GM10248 (cell line): ENCODE measurements at regions of chr11 and their contacts with region 1.

Region 1: DNA sequence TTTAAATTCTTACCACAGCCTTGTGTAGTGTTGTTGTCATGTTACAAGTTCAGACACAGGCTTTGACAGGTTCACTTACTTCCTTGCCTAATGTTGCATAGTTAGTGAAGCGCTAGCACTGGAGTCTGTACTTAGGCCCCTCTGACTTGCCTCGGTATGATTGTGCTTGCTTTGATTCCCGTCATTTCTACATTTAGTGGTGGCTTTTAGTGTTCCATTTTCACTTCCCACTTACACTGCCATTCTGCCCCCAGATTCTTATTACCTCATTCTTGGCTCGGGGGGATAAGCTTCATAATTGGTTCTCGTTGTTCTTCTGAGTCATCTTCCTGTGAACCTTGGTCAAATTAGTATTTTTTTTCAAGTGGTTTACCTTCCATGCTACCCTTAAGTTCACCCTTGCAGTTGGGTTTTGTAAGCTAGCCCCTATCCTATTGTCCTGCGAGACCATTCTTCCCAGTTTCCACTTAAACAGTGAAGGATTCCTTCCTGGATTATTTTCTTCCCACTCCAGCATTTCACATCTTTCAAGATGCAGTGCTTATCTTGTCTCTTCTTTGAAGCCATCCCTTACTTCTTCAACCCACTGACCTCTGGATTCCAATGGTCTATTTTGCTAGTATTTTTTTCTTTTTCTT is 68.7 kb downstream of the DDX10 start:
- DNase-seq: peak; percentile 40
- CTCF ChIP-seq: peak; percentile 1

Region 2: DNA sequence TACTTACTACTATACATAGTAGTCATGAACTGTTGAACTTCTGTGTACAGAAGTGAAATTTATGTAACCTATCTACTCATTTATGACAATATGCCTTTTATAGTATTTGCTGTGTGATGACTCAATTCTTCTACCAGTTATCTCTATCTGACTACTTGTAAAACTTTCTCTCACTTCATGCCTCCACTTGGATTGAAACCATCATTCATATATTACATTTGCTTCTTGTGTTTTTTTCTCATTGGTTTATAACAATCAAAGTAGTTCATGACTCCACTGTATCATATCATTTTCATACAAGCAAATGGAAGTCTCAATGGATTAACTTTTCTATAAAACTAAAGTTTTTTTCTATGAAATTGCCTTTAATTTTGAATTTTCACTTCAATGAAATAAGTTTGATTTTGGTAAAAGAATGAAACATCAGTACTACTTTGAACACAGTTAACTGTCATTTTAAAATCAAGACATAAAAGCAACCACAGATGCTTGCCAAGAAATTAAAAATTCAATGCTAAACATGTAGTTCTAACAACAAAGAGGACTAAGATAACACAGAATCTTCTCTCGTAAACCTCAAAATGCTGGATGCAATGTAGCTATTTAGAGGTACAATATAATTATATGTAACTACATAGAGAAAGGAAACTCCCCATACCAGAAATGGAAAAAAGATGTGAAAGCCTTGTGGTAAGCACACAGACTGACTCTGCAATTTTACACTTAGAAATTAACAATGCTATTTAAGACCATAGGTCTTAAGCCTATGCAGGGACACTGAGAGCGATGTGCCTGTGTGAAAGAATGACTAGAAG is 112.4 kb before region 1 on chr11:
- CTCF ChIA-PET with region 1: no interaction called
- POLR2A ChIA-PET with region 1: no interaction called
- DNase-seq: peak; percentile 55
- CTCF ChIP-seq: no peak

Region 3: DNA sequence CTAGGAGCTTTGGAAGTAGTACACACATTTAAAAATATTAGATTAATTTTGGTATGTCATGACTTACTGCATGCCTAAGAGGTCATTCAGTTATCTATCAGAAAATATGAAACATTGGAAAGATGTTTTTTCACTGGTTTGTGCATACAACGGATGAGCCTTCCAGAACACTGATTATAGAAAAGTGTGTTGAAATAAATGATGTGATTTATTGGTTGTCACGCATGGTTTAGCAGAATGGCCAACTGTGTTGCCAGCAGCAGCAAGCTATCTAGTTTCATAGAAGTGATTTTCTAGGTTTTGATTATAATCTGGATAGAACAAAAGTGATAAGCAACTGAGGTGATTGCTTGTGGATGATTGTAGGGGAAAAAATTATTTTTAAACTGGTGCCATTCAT is 15.1 kb before region 1 on chr11:
- CTCF ChIA-PET with region 1: interaction called, 20 read pairs
- POLR2A ChIA-PET with region 1: no interaction called
- DNase-seq: no peak
- CTCF ChIP-seq: no peak

Region 4: DNA sequence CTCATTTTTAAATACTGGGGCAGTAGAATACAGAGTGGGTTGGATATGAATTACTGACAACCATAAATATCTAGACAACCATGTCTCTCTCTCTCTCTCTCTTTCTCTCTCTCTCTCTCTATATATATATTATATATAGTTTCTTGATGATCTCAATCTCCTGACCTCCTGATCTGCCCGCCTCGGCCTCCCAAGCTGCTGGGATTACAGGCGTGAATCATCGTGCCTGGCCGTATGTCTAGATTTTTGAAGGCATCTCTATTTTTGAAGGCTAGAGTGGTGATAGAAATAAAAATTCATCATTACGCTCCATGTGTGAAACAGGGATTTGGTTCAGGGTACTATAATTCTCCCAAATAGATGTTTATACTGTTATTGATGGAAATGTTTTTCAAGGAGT is 15.4 kb after region 1 on chr11:
- CTCF ChIA-PET with region 1: interaction called, 40 read pairs
- POLR2A ChIA-PET with region 1: no interaction called
- DNase-seq: no peak
- CTCF ChIP-seq: no peak

Region 5: DNA sequence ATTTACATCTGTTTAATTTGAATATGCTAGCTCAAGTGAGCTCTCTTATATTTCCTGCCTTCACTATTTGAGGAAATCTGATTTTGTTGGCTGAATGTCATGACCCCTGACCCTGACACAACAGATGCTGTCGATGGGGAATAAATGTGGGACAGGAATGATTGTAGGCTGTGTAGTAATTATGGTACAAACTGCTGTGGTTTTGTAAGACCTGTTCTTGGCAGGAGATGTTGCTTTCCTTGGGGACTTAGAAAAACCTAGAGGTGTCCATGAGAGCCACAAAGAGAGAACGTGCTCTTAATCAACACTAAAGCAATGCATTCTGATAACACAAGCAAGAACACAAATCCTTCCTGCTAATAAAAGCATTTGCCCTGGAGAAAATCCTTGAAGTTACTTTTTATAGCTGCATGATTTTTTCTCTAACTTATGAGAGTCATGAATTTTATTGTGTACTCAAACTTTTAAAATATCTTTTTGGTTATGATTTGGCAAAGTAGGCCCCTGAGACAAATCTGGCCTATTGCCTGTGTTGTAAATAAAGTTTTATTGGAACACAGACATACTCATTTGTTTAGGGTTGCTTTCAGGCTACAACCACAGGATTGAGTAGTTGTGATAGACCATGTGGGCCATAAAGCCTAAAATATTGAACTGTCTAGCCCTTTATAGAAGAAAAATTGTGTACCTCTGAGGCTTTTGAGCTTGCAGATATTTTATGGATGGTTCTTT is 21.5 kb after region 1 on chr11:
- CTCF ChIA-PET with region 1: interaction called, 40 read pairs
- POLR2A ChIA-PET with region 1: no interaction called
- DNase-seq: no peak
- CTCF ChIP-seq: no peak